Panc1 (cell line): ENCODE measurements at regions of chr2 and their contacts with region 1.

Region 1: DNA sequence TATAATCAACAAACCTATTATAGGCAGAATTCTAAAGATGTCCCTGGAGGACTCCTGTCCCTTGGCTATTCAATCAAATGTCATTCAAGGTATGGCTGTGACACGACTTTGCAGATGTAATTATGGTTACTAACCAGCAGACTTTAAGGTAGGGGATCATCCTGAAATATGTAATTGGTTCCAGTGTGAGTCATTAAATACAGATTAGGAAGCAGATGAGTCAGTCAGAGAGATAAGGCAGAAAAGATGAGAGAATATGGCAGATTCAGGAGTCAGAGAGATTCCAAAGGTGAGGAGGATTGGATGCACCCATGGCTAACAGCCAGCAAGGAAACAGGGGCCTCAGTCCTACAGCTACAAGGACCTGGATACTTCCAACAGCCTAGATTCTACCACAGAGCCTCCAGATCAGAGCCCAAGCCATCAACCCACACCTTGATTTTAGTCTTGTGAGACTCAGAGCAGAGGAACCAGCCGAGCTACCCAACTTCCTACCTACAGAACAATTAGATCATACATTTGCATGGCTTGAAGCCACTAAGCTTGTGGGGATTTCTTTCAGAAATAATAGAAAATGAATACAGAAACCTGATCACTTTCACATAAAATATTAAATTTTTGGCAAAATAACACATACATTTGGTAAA is 11.2 kb upstream of the PROM2 start:
- DNase-seq: no peak
- ATAC-seq: no peak
- H3K4me3 ChIP-seq: no peak overlapping the region
- H3K27ac ChIP-seq: no peak overlapping the region
- H3K4me1 ChIP-seq: no peaks in the 10 kb centered on the region
- H3K27me3 ChIP-seq: no peaks in the 10 kb centered on the region
- CTCF ChIP-seq: no peak

Region 2: GRCh38 chr2:95040426-95040825 is 222.6 kb before region 1 on chr2:
- CTCF ChIA-PET with region 1: interaction called, 10 read pairs
- POLR2A ChIA-PET with region 1: no interaction called
- in situ Hi-C with region 1: no loop called
- intact Hi-C with region 1: no loop called
- DNase-seq: no peak
- ATAC-seq: no peak
- H3K4me3 ChIP-seq: no peak overlapping the region
- H3K27ac ChIP-seq: no peak overlapping the region
- H3K4me1 ChIP-seq: no peaks in the 10 kb centered on the region
- H3K27me3 ChIP-seq: no peaks in the 10 kb centered on the region
- CTCF ChIP-seq: no peak

Region 3: GRCh38 chr2:95091885-95092555 is 171.0 kb before region 1 on chr2:
- CTCF ChIA-PET with region 1: no interaction called
- POLR2A ChIA-PET with region 1: no interaction called
- in situ Hi-C with region 1: no loop called
- intact Hi-C with region 1: no loop called
- DNase-seq: no peak
- ATAC-seq: no peak
- H3K4me3 ChIP-seq: no peak overlapping the region
- H3K27ac ChIP-seq: no peak overlapping the region
- H3K4me1 ChIP-seq: no peaks in the 10 kb centered on the region
- H3K27me3 ChIP-seq: no peaks in the 10 kb centered on the region
- CTCF ChIP-seq: no peak